Activated CD4-positive, alpha-beta T cell treated with anti-CD3 and anti-CD28 coated beads for 36 hours (primary cell): ENCODE measurements at regions of chr12 and their contacts with region 1.

Region 1: DNA sequence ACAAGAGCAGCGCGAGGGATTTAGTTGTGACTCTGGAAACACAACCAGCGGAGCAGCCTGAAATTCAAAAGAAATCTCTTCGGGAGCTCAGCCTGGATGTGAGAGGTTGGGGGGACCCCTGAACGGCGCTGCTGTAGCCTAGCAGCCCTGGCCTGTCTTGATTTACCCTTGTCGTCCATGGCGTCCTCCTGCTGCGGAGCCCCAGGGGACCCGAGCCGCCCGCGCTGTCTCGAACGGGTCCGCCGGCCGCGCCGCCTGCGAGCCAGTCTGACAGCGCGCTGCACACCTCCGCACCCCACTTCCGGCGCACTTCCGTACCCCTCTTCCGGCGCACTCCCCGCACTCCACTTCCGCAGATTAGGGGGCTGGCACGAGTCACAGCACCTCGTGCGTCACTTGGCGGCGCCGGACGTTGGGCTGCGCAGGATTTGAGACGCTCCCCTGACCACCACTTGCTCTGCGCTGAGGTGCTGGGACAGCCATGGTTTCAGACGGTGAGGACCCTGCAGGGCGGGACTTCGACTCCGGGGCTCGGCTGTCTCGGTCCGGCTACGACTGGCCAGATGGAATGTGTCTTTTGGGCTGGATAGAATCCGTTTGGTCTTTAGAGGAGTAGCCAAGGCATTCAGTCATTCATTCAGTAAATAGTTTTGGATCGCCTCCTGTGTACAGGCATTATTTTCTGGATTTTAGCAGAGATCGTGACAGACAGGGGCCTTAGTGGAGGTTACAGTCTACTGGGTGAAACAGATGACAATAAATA is at the starts of genes EIF2B1 and GTF2H3:
- DNase-seq: peak; percentile 99
- ATAC-seq: peak; percentile 97
- H3K4me3 Mint-ChIP-seq: peak within 1 kb of the TSS; percentile 93
- H3K27ac Mint-ChIP-seq: peak within 1 kb of the TSS; percentile 96
- H3K4me1 Mint-ChIP-seq: peaks cover 19% of the 10 kb centered on the region
- H3K27me3 Mint-ChIP-seq: no peaks in the 10 kb centered on the region
- total RNA-seq, gene EIF2B1: 52.7 to 61.0 TPM
- total RNA-seq, gene GTF2H3: 60.4 to 77.1 TPM

Region 2: GRCh38 chr12:122974274-122974891 is 659.2 kb before region 1 on chr12:
- CTCF ChIA-PET with region 1: no interaction called
- POLR2A ChIA-PET with region 1: no interaction called
- intact Hi-C with region 1: loop called in 1 of 2 experiments (anchors 1 kb)
- DNase-seq: peak; percentile 99
- ATAC-seq: peak; percentile 86
- H3K4me3 Mint-ChIP-seq: peak overlapping the region; percentile 95
- H3K27ac Mint-ChIP-seq: peak overlapping the region; percentile 100
- H3K4me1 Mint-ChIP-seq: peaks cover 21% of the 10 kb centered on the region
- H3K27me3 Mint-ChIP-seq: no peaks in the 10 kb centered on the region

Region 3: DNA sequence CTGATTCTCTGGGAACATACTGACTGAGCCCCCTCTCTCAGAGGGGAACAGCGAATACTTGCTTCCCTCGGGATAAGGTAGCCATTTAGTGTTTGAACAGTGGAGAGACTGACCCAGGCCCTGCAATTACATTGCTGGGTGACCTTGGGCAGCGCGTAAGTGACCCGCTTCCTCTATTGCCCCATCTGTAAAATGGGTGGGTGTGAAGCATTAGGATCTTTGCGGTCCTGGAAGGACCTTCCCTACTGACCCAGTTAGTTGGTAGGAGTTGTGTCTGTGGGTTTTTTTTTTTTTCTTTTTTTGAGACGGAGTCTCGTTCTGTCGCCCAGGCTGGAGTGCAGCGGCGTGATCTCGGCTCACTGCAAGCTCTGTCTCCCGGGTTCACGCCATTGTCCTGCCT is 250.9 kb before region 1 on chr12:
- CTCF ChIA-PET with region 1: no interaction called
- POLR2A ChIA-PET with region 1: no interaction called
- intact Hi-C with region 1: loop called in 1 of 2 experiments (anchors 1 kb)
- DNase-seq: no peak
- ATAC-seq: no peak
- H3K4me3 Mint-ChIP-seq: peak overlapping the region; percentile 50
- H3K27ac Mint-ChIP-seq: no peak overlapping the region
- H3K4me1 Mint-ChIP-seq: peaks cover 8% of the 10 kb centered on the region
- H3K27me3 Mint-ChIP-seq: no peaks in the 10 kb centered on the region

Region 4: DNA sequence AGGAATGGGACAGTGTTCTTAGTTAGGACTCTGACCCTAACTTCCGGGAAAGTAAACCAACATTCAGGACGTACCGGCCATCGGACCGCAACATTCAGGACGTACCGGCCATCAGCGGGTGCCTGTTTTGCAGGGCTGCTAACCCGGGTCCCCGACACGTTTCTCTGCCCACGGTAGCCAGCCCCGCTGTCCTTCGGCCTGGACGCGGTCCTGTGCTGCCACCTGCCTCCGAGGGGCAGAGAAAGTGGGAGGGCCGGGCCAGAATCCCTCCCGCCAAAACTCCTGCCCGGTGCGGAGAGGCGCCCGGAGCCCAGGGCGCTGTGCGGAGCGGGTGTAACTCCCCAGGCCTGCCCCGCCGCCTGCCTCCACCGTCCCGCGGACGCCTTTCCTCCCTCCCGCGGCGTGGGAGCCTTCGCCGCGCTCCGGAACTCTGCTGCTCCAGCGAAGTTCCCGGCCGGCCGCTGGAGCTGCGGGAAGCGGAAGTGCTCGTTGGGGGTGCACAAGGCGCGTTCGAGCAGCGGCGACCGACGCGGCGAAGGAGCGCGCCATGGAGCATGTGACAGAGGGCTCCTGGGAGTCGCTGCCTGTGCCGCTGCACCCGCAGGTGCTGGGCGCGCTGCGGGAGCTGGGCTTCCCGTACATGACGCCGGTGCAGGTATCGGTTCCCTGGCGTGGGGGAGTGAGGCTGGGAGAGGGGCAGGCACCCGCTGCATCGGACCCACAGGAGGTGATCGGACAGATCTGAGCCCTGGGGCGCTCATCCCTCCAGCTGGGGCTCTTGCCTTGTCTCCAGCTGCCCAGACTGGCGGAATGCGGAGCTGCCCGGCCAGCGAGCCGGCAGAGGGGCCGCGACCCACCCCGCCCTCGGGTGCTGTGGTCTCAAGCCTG is 31.7 kb before region 1 on chr12 and contains the start of gene DDX55:
- CTCF ChIA-PET with region 1: interaction called, 8 read pairs
- POLR2A ChIA-PET with region 1: no interaction called
- intact Hi-C with region 1: loop called (anchors 1 kb)
- DNase-seq: peak; percentile 93
- ATAC-seq: peak; percentile 95
- H3K4me3 Mint-ChIP-seq: peak within 1 kb of the TSS; percentile 85
- H3K27ac Mint-ChIP-seq: peak within 1 kb of the TSS; percentile 92
- H3K4me1 Mint-ChIP-seq: peaks cover 36% of the 10 kb centered on the region
- H3K27me3 Mint-ChIP-seq: no peaks in the 10 kb centered on the region
- total RNA-seq, gene DDX55: 44.3 to 49.4 TPM

Region 5: GRCh38 chr12:123761841-123762714 is 128.5 kb after region 1 on chr12 and contains the start of gene DNAH10:
- CTCF ChIA-PET with region 1: no interaction called
- POLR2A ChIA-PET with region 1: no interaction called
- intact Hi-C with region 1: loop called in 1 of 2 experiments (anchors 1 kb)
- DNase-seq: peak; percentile 72
- ATAC-seq: peak; percentile 80
- H3K4me3 Mint-ChIP-seq: peak within 1 kb of the TSS; percentile 66
- H3K27ac Mint-ChIP-seq: no peak within 1 kb of the TSS
- H3K4me1 Mint-ChIP-seq: peaks cover 6% of the 10 kb centered on the region
- H3K27me3 Mint-ChIP-seq: peaks cover under 1% of the 10 kb centered on the region
- total RNA-seq, gene DNAH10: 0.16 to 0.37 TPM

Region 6: DNA sequence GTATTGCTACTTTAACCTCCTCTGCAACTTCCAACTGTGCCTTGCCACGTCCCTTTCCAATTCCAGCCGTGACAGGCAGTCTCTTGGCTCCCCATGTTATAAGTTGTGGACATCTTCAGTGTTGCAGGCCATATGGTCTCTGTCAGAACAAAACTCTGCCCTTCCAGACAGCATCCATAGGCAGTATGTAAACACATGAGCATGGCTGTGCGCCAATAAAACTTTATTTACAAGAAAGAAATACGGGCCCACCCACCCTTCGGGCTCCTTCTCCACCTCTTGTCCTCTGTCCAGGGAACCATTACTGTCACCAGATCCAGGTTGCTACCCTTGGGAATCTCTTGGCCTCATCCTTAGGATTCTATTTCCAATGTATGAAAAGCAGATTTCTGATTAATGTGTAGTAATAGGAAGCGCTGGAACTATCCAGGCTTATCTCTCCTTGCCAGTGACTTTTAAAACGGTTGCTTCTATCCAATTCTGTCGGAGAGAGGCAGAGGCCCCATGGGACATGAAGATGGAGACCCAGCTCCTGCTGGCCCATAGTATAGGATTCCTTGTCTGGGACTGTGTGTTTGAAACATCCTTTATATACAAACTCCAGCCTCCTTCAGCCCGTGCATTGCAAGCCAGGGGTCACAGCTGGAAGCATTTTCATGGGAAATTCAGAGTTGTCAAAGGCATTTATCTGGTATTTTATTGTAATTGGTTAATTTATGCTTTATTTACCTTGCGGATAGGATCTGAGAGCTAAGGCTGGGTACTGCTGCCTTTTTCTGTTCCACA is 453.9 kb after region 1 on chr12:
- CTCF ChIA-PET with region 1: no interaction called
- POLR2A ChIA-PET with region 1: no interaction called
- intact Hi-C with region 1: no loop called
- DNase-seq: no peak
- ATAC-seq: no peak
- H3K4me3 Mint-ChIP-seq: no peak overlapping the region
- H3K27ac Mint-ChIP-seq: no peak overlapping the region
- H3K4me1 Mint-ChIP-seq: no peaks in the 10 kb centered on the region
- H3K27me3 Mint-ChIP-seq: peaks cover 3% of the 10 kb centered on the region